Activated CD8-positive, alpha-beta T cell treated with anti-CD3 and anti-CD28 coated beads for 36 hours (primary cell): ENCODE measurements at regions of chr13 and their contacts with region 1.

Region 1: DNA sequence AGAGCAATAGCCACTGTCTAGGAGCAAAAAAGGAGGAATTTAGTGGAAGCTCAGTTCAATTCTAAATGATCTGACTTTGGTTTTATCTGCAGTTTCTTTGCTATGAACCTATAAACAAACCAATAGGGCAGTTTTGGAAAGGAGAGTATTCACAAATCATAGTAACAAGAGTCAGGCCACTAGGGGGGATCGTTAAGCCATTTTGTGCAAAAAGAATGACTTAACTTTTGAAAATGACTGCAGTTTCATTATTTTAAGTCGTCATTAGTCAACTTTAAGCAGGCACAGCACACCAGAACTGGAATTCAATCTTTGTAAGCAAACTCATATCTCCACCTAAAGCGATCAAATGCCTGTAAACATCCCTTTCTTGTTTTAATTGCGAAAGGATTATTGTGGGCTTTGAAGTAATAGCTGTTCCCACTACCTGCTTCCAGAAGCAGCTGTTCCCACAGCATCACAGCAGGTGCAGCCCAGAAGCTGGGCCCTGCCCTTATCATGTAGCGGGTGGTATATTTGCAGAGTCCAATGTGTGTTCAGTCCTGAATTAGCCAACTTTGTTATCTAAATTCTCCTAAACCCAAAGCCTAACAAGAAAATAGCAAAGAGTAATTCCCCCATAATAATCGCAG is 51.5 kb downstream of the SOX21 start:
- DNase-seq: peak; percentile 39
- ATAC-seq: no peak
- H3K4me3 Mint-ChIP-seq: no peak overlapping the region
- H3K27ac Mint-ChIP-seq: no peak overlapping the region
- H3K4me1 Mint-ChIP-seq: peaks cover 20% of the 10 kb centered on the region
- H3K27me3 Mint-ChIP-seq: peaks cover 32% of the 10 kb centered on the region
- CTCF ChIP-seq: peak; percentile 17

Region 2: DNA sequence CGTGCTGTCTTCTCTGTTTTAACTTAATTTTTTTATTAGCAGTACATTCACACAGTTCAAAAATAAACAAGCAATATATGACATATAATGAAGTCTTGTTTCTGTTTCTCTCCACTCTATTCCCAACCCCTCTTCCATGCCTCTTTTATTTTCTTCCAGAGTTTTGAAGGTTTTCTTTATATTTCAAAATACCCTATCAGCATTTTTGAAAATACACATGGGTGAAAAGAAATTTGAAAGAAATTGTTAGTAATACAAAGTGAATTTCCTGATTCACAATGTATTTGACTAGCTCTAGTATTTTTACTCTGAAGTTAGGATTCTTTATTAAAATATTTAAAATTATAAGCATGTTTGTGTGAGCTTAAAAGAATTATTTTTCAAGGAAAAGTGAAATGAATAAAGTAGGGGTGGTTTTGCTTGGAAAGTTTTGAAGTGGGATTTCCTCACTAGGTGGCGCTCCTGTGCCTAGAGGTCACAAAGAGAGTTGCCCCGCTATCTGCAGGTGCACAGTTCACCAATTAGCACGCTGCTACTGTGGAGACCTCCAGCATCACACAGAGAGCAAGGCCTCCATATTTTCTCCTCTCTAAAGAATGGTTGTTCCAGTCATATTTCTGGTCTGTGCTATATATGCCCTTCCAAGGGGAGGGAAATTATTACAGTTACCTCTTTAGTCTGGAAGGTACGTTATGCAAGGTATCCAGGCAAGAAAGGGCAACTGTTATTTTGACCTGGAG is 14.0 kb after region 1 on chr13:
- CTCF ChIA-PET with region 1: interaction called, 11 read pairs
- POLR2A ChIA-PET with region 1: interaction called, 4 read pairs
- intact Hi-C with region 1: no loop called
- DNase-seq: peak; percentile 81
- ATAC-seq: peak; percentile 70
- H3K4me3 Mint-ChIP-seq: no peak overlapping the region
- H3K27ac Mint-ChIP-seq: no peak overlapping the region
- H3K4me1 Mint-ChIP-seq: no peaks in the 10 kb centered on the region
- H3K27me3 Mint-ChIP-seq: peaks cover 27% of the 10 kb centered on the region
- CTCF ChIP-seq: peak; percentile 82

Region 3: GRCh38 chr13:94710881-94711560 is 50.2 kb after region 1 on chr13:
- CTCF ChIA-PET with region 1: interaction called, 4 read pairs
- POLR2A ChIA-PET with region 1: no interaction called
- intact Hi-C with region 1: loop called (anchors 2 kb)
- DNase-seq: peak; percentile 27
- ATAC-seq: peak; percentile 73
- H3K4me3 Mint-ChIP-seq: peak overlapping the region; percentile 45
- H3K27ac Mint-ChIP-seq: no peak overlapping the region
- H3K4me1 Mint-ChIP-seq: peaks cover 27% of the 10 kb centered on the region
- H3K27me3 Mint-ChIP-seq: peaks cover 69% of the 10 kb centered on the region
- CTCF ChIP-seq: no peak

Region 4: DNA sequence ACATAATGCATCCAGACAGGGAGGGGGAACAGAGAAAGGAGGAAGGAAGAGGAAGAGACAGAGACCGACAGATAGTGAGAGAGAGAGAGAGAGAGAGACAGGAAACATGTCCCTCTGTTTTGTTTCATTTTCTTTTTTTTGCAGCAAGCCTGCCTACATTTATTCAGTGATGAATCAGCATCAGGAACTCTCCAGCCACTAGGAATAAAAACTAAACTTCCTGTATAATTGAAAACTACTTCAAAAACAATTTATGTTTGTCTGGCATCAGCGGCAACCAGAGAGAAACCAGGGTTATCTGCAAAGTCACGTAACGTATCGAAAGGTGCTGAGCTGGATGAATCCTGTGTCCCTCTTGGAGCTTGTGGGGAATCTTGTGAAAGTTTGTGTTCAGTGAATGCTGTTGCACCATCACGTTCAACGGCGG is 200.2 kb after region 1 on chr13:
- CTCF ChIA-PET with region 1: no interaction called
- POLR2A ChIA-PET with region 1: no interaction called
- intact Hi-C with region 1: no loop called
- DNase-seq: no peak
- ATAC-seq: peak; percentile 55
- H3K4me3 Mint-ChIP-seq: peak overlapping the region; percentile 72
- H3K27ac Mint-ChIP-seq: peak overlapping the region; percentile 76
- H3K4me1 Mint-ChIP-seq: peaks cover 6% of the 10 kb centered on the region
- H3K27me3 Mint-ChIP-seq: peaks cover 7% of the 10 kb centered on the region
- CTCF ChIP-seq: no peak

Region 5: DNA sequence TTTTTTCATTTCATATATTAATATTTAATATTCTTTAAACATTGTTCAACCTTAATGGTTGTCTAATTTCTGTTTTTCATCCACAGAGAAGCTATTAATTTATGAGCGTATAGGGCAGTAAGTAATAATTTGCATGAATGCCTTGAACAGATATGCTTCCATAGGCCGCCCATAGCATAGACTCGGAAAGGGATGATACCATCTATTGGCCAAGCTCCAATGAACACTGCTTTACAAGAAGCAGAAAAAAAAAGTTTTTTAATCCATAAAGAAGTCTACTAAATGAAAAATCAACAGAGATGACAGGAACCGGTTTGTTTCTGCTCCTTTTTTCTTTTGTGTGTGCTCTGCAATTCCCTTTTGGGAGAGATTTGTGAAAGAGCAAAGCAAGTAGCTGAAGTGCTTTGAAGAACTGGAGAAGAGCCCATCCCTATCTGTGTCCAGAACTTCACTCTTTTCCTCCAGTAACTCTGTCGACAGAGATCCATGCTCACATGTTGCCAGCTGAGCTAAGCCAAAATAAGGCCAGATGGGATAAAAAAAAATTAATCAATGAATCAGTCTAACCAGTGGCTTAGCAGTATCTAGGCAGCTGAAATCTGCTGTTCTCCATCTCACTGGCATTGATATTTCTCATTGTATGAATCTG is 267.4 kb after region 1 on chr13:
- CTCF ChIA-PET with region 1: no interaction called
- POLR2A ChIA-PET with region 1: no interaction called
- intact Hi-C with region 1: no loop called
- DNase-seq: no peak
- ATAC-seq: no peak
- H3K4me3 Mint-ChIP-seq: no peak overlapping the region
- H3K27ac Mint-ChIP-seq: no peak overlapping the region
- H3K4me1 Mint-ChIP-seq: no peaks in the 10 kb centered on the region
- H3K27me3 Mint-ChIP-seq: peaks cover 4% of the 10 kb centered on the region
- CTCF ChIP-seq: no peak